ENCODE measurements at regions of chr6 and their contacts with region 1.

Region 1: DNA sequence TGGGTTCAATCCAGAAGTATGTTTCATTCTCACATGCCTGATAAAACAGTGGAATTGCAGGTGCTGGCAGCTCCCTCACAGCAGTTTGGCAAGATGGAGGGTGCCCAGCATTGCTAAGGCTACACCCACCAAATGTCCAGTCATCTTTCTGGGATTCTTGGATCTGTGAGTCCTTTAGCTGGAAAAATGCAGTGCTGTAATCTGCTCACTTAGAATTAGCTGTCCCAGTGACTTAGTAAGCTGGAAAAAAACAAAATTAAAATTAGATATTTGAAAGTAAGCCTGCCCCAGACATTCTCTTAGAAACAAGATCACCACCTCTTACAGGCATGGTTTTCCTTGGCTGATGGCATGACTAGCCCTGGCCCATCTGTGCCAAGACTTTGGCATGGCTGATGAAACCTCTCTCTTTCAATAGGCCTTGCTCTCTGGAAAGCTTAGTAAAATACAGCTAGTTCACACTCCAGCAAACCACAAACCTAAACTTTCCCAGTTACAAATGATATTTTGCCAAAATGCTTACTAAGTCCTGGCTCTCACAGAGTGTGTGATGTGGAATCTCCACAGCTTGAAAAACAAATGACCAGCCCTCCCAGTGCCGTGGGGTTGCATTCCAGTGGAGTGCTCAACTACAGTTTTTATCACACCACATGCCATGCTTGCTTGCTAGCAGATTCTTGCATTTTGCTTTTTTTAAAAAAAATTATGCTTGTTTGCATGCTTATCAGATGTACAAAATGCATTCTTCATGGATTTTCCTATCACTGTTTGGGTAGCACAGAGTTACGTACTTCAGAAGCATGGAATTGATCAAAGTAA is 261.5 kb downstream of the EYA4 start:
- DNase-seq: no peak
- ATAC-seq: peak; percentile 46 to 77 (median 66)
- H3K4me3 ChIP-seq: no peak overlapping the region
- H3K27ac ChIP-seq: peak overlapping the region in 8 of 10 donors; percentile 36 to 67 (median 55)
- H3K4me1 ChIP-seq: peaks cover 4 to 52% (median 30%) of the 10 kb centered on the region in 9 donors
- H3K27me3 ChIP-seq: no peaks in the 10 kb centered on the region
- CTCF ChIP-seq: no peak

Region 2: DNA sequence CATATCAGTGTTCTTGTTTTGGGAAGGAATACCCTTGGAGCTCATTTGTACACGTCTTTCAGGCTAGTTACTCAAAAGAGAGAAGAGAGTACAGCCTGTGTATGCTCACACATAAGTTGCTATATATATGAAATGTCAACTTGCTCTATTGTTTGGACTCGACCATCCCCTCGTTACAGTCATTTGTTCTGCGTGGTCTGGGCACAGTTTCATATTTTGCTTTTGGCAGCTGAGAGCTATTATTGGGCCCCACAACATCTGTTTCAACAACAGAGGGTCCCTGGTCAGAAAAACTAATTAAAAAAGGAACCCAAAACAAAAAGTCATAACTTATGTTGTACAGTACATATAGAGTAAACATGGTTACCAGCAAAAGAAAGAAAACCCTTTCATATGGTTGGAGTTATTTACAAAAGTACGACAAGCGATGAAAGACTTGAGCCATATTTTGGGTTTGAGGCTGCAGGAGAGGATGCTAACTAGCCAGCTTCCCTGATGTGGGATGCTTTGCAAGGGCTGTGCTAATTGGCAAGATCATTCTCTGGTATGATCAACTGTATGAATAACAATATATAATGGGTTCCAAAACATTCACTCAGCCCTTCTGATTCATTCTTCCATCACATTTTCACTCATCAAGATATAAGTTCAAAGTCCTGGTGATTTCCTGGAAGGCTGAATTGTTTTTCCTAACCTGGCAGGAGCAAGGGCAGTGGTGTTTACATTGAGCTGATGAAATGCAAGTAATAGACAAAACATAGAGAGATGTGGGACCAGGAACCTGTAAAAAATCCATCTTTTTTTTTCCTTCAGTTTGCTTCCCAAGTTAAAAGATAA is 550.4 kb before region 1 on chr6:
- intact Hi-C with region 1: loop called in 1 of 10 experiments (anchors 10 kb)
- DNase-seq: no peak
- ATAC-seq: no peak
- H3K4me3 ChIP-seq: no peak overlapping the region
- H3K27ac ChIP-seq: no peak overlapping the region
- H3K4me1 ChIP-seq: peaks cover 0 to 6% (median 0%) of the 10 kb centered on the region in 9 donors
- H3K27me3 ChIP-seq: no peaks in the 10 kb centered on the region
- CTCF ChIP-seq: no peak

Region 3: GRCh38 chr6:133184798-133185372 is 317.8 kb before region 1 on chr6:
- intact Hi-C with region 1: loop called in 2 of 10 experiments (anchors 10 kb)
- DNase-seq: no peak
- ATAC-seq: no peak
- H3K4me3 ChIP-seq: no peak overlapping the region
- H3K27ac ChIP-seq: no peak overlapping the region
- H3K4me1 ChIP-seq: no peaks in the 10 kb centered on the region
- H3K27me3 ChIP-seq: no peaks in the 10 kb centered on the region
- CTCF ChIP-seq: peak; percentile 7 to 70 (median 57)

Region 4: DNA sequence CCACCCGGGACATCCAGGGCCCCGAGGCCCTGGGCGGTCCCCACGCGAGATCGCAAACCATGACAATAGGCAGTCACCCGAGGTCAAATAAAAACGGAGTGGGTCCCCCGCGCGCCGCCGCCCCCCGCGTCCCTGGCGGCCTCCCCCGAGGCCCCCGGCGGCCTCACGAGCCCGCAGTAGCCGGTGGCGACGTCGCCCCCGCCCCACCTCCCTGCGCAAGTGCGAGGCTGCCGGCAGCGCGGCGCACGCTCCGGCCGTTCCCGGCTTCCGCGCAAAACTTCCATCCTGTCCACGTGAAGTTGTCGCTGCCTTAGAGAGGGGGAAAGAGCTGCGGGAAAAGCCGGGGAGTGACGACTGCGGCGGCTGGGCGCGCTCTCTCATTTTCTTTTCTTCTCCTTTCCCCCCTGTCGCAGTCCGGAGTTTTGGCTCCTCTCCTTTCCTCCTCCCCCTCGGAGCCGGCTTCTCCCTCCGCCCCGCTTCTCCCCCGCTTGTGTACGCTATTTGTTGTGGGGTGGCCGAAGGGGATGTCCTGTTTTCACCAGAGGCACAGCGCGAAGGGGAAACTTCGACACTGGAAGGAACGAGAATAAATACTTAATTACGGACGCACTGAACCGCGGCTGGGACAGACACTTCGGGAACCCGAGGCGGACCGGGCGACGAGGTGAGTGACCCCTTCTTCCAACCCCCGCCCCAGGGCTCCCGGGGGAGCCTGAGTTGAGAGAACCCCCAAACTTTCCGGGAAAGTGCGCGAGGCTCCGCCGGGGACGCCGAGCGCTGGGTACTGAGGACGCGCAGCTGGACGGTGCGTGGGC is 261.4 kb before region 1 on chr6 and contains the start of gene EYA4:
- intact Hi-C with region 1: loop called in 2 of 10 experiments (anchors 5 to 10 kb)
- DNase-seq: peak; percentile 27 to 50
- ATAC-seq: peak; percentile 64 to 88 (median 71)
- H3K4me3 ChIP-seq: peak within 1 kb of the TSS; percentile 24 to 73 (median 62)
- H3K27ac ChIP-seq: peak within 1 kb of the TSS; percentile 66 to 93 (median 86)
- H3K4me1 ChIP-seq: peaks cover 0 to 19% (median 3%) of the 10 kb centered on the region in 9 donors
- H3K27me3 ChIP-seq: peaks cover 0 to 66% (median 54%) of the 10 kb centered on the region in 7 donors
- CTCF ChIP-seq: peak in 2 of 9 donors; percentile 7 to 26
- total RNA-seq, gene EYA4: 10.6 to 30.2 (median 19.6) TPM